BJ (cell line): ENCODE measurements at regions of chr22 and their contacts with region 1.

Region 1: DNA sequence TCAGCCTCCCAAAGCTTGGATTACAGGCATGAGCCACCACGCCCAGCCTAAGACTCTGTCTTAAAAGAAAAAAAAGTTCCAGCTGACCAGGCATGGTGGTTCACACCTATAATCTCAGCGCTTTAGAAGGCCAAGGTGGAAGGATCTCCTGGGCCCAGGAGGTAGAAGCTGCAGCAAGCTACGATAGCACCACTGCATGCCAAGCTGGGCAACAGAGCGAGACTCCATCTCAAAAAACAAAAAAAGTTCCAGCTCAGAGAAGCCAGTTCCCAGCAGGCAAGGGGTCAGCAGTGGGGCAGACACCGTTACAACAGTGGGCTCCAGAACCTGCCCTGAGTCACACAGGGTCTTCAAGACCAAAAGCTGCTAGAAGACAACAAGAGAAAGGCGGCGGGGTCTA is 3.3 kb downstream of the TMEM184B start:
- DNase-seq: no peak
- H3K4me3 ChIP-seq: no peak overlapping the region
- H3K27me3 ChIP-seq: no peaks in the 10 kb centered on the region
- CTCF ChIP-seq: no peak

Region 2: GRCh38 chr22:38104084-38104483 is 165.4 kb before region 1 on chr22:
- CTCF ChIA-PET with region 1: no interaction called
- POLR2A ChIA-PET with region 1: interaction called, 18 read pairs
- DNase-seq: no peak
- H3K4me3 ChIP-seq: no peak overlapping the region
- H3K27me3 ChIP-seq: no peaks in the 10 kb centered on the region
- CTCF ChIP-seq: peak; percentile 31; the same call in 1 of the 2 replicates

Region 3: GRCh38 chr22:38240734-38241252 is 28.7 kb before region 1 on chr22:
- CTCF ChIA-PET with region 1: no interaction called
- POLR2A ChIA-PET with region 1: no interaction called
- DNase-seq: peak; percentile 41
- H3K4me3 ChIP-seq: no peak overlapping the region
- H3K27me3 ChIP-seq: no peaks in the 10 kb centered on the region
- CTCF ChIP-seq: no peak

Region 4: GRCh38 chr22:38504731-38505540 is 235.5 kb after region 1 on chr22:
- CTCF ChIA-PET with region 1: no interaction called
- POLR2A ChIA-PET with region 1: no interaction called
- DNase-seq: no peak
- H3K4me3 ChIP-seq: peak overlapping the region; percentile 91
- H3K27me3 ChIP-seq: no peaks in the 10 kb centered on the region
- CTCF ChIP-seq: no peak